ENCODE measurements at regions of chr5 and their contacts with region 1.

Region 1: GRCh38 chr5:134026521-134027268 is 21.9 kb upstream of the VDAC1 start:
- DNase-seq: peak; percentile 82
- H3K4me3 Mint-ChIP-seq: no peak overlapping the region
- H3K27ac Mint-ChIP-seq: no peak overlapping the region
- H3K4me1 Mint-ChIP-seq: peaks cover 28% of the 10 kb centered on the region
- H3K27me3 Mint-ChIP-seq: no peaks in the 10 kb centered on the region
- CTCF ChIP-seq: peak; percentile 59

Region 2: DNA sequence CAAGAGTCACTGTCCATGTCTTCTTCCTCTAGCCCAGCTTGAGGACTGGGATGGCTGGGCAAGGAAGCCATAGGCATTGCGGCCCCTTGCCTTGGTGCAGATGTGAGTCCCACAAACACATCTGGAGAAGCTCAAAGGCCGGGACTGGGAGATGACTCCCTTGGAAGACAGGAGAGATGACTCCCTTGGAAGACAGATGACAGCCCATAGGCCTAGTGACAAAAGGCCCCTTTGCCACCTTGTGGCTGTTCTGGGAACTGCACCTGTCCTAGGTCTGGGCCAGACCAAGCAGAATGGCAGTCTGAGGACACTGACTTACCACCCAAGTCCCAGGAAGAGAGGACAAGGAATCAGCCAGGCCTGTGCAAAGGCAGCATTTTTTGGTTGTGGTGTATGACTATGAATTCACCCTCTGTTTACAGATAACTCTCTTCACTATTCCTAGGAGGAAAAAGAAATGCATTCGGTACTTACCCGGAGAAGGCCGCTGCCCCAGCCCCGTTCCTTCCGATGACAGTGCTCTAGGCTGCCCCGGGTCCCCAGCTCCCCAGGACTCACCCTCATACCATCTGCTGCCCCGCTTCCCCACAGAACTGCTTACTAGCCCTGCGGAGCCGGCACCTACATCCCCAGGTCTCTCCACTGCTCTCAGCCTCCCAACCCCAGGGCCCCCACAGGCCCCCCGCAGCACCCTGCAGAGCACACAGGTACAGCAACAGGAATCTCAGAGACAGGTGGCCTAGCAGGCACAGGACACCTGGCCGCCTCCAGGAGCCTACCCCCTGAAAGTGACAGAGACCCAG is 119.3 kb after region 1 on chr5:
- CTCF ChIA-PET with region 1: interaction called, 17 read pairs
- intact Hi-C with region 1: no loop called
- DNase-seq: peak; percentile 87
- H3K4me3 Mint-ChIP-seq: no peak overlapping the region
- H3K27ac Mint-ChIP-seq: no peak overlapping the region
- H3K4me1 Mint-ChIP-seq: peaks cover 48% of the 10 kb centered on the region
- H3K27me3 Mint-ChIP-seq: no peaks in the 10 kb centered on the region
- CTCF ChIP-seq: peak; percentile 98